PC-3 (cell line): ENCODE measurements at regions of chr12 and their contacts with region 1.

Region 1: DNA sequence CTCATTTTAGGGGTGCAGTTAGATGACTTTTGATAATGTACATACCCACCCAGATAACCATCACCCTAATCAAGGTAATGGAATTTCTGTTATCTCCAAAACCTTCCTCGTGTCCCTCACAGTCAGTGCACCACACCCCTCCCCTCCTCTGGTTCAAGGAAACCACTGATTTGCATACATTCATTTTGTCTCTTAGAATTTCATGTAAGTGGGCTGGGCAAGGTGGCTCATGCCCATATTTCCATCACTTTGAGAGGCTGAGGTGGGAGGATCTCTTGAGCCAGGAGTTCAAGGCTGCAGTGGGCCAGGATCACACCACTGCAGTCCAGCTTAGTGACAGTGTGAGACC is 15.7 kb downstream of the ADIPOR2 start:
- DNase-seq: no peak
- ATAC-seq: peak; percentile 62
- H3K4me3 ChIP-seq: peak overlapping the region; percentile 48
- H3K27ac ChIP-seq: peak overlapping the region; percentile 99
- H3K4me1 ChIP-seq: peaks cover 41% of the 10 kb centered on the region
- H3K27me3 ChIP-seq: no peaks in the 10 kb centered on the region
- CTCF ChIP-seq: no peak

Region 2: DNA sequence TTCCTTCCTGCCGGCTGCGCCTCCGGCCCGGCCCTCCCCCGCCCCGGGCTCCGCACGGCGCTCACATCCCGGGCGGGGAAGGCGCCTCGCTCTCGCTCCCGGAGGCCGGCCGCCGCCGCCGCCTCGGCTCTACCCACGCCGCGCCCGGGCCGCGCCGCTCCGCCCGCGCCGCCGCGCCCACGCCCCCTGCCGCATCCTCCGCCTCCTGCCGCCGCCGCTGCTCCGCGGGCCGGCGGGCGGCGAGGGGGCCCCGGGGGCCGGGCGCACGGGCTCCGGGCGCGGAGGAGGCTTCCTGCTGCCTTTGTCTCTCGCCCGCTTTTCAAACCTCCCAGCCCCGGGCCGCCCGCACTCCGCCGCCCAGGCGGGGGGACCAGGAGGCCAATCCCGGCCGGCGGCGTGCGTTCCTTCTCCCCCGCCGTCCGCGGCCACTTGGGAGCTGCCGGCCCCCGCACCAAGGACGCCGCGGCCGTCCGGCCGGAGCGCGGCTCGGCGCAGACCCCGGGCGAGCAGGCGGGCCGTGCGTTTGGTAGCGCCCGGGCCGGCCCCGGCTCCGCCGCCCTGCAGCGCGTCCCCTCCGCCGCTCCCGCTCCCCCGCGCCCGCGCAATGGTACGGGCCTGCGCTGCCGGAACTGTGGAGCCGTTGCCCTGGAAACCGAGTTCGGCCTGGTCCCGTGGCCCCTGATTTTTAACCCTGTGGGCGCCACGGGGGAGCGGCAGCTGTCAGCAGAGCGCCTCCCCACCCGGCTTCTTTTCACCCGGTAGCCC is 112.2 kb before region 1 on chr12 and contains the start of gene FBXL14:
- CTCF ChIA-PET with region 1: no interaction called
- POLR2A ChIA-PET with region 1: no interaction called
- intact Hi-C with region 1: no loop called
- DNase-seq: peak; percentile 71
- ATAC-seq: peak; percentile 68
- H3K4me3 ChIP-seq: peak within 1 kb of the TSS; percentile 94
- H3K27ac ChIP-seq: peak within 1 kb of the TSS; percentile 19; the same call in 1 of the 2 replicates
- H3K4me1 ChIP-seq: peaks cover 31% of the 10 kb centered on the region
- H3K27me3 ChIP-seq: no peaks in the 10 kb centered on the region
- CTCF ChIP-seq: no peak
- total RNA-seq, gene FBXL14: 18.3 and 21.8 TPM in 2 replicates

Region 3: GRCh38 chr12:1605129-1606020 is 101.2 kb before region 1 on chr12:
- CTCF ChIA-PET with region 1: no interaction called
- POLR2A ChIA-PET with region 1: no interaction called
- intact Hi-C with region 1: no loop called
- DNase-seq: peak; percentile 84
- ATAC-seq: peak; percentile 69
- H3K4me3 ChIP-seq: peak overlapping the region; percentile 66
- H3K27ac ChIP-seq: peak overlapping the region; percentile 45
- H3K4me1 ChIP-seq: peaks cover 10% of the 10 kb centered on the region
- H3K27me3 ChIP-seq: no peaks in the 10 kb centered on the region
- CTCF ChIP-seq: peak; percentile 83

Region 4: GRCh38 chr12:1769809-1770494 is 63.3 kb after region 1 on chr12:
- CTCF ChIA-PET with region 1: no interaction called
- POLR2A ChIA-PET with region 1: no interaction called
- intact Hi-C with region 1: loop called (anchors 2 kb)
- DNase-seq: peak; percentile 73
- ATAC-seq: peak; percentile 79
- H3K4me3 ChIP-seq: no peak overlapping the region
- H3K27ac ChIP-seq: peak overlapping the region; percentile 38
- H3K4me1 ChIP-seq: peaks cover 37% of the 10 kb centered on the region
- H3K27me3 ChIP-seq: no peaks in the 10 kb centered on the region
- CTCF ChIP-seq: no peak